ENCODE measurements at regions of chr12 and their contacts with region 1.

Region 1: DNA sequence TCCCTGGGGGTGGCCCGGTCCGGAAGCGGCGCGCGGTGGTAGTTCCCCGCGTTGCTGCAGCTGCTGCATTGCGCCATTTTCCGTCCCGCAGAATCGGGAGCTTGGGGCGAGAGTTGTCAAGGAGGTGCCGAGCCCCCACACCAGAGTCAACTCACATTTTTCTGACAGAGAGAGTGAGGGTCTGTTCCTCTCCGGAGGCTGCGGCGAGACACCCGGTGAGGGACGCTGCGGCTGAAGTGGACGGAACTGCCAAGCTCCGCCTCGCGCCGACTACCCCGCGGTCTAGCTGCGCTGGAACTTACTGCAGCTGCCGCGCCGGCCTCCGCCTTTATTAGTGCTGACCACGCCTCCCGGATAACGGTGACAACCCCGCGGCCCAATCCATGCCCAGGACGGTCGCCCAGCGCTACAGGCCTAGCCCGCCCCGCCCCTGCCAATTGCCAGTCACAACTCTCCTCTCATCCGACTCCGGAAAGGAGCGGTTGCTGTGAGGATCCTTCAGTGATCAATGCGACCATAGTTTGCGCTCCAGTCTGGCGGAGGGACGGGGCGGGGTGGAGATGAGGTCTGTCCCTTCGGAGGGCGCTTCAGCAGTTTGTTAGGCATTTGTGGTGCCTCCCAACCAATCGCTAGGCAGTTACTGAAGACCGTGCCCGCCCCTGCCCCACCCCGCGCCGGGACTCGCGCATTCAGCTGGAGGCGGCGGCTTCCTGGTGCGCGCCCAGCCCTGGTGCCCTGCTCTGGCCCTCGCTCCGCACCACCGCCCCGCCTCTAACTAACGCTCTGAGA is at the start of gene VAMP1:
- DNase-seq: peak; percentile 92
- ATAC-seq: peak; percentile 96
- H3K4me3 ChIP-seq: peak within 1 kb of the TSS; percentile 99
- H3K27ac ChIP-seq: peak within 1 kb of the TSS; percentile 63
- H3K4me1 ChIP-seq: peaks cover 18% of the 10 kb centered on the region
- H3K27me3 ChIP-seq: no peaks in the 10 kb centered on the region
- CTCF ChIP-seq: no peak
- EP300 ChIP-seq: no peak
- POLR2A ChIP-seq: peak; percentile 100
- RAD21 ChIP-seq: no peak
- polyA plus RNA-seq, gene VAMP1: 4.8 to 8.8 TPM

Region 2: GRCh38 chr12:6285063-6285477 is 185.5 kb before region 1 on chr12:
- CTCF ChIA-PET with region 1: interaction called, 10 read pairs
- POLR2A ChIA-PET with region 1: interaction called, 4 read pairs
- RAD21 ChIA-PET with region 1: interaction called, 5 read pairs
- SMC1A ChIA-PET with region 1: interaction called, 13 read pairs
- in situ Hi-C with region 1: no loop called
- intact Hi-C with region 1: no loop called
- DNase-seq: no peak
- ATAC-seq: peak; percentile 96
- H3K4me3 ChIP-seq: no peak overlapping the region
- H3K27ac ChIP-seq: no peak overlapping the region
- H3K4me1 ChIP-seq: no peaks in the 10 kb centered on the region
- H3K27me3 ChIP-seq: no peaks in the 10 kb centered on the region; a peak in 1 of 4 replicates
- CTCF ChIP-seq: peak; percentile 91 to 96 (median 91); a peak in 5 of 6 replicates
- EP300 ChIP-seq: no peak
- POLR2A ChIP-seq: no peak
- RAD21 ChIP-seq: peak; percentile 95

Region 3: GRCh38 chr12:6335451-6336078 is 135.0 kb before region 1 on chr12:
- CTCF ChIA-PET with region 1: interaction called, 43 read pairs
- POLR2A ChIA-PET with region 1: interaction called, 22 read pairs
- RAD21 ChIA-PET with region 1: interaction called, 44 read pairs
- SMC1A ChIA-PET with region 1: interaction called, 39 read pairs
- in situ Hi-C with region 1: loop called (anchors 5 kb)
- intact Hi-C with region 1: loop called (anchors 2 kb)
- DNase-seq: peak; percentile 60
- ATAC-seq: peak; percentile 85
- H3K4me3 ChIP-seq: peak overlapping the region; percentile 53
- H3K27ac ChIP-seq: peak overlapping the region; percentile 93
- H3K4me1 ChIP-seq: peaks cover 45% of the 10 kb centered on the region
- H3K27me3 ChIP-seq: no peaks in the 10 kb centered on the region
- CTCF ChIP-seq: peak; percentile 71 to 92 (median 76)
- EP300 ChIP-seq: no peak; a peak in 1 of 4 replicates
- POLR2A ChIP-seq: peak; percentile 83
- RAD21 ChIP-seq: peak; percentile 75

Region 4: DNA sequence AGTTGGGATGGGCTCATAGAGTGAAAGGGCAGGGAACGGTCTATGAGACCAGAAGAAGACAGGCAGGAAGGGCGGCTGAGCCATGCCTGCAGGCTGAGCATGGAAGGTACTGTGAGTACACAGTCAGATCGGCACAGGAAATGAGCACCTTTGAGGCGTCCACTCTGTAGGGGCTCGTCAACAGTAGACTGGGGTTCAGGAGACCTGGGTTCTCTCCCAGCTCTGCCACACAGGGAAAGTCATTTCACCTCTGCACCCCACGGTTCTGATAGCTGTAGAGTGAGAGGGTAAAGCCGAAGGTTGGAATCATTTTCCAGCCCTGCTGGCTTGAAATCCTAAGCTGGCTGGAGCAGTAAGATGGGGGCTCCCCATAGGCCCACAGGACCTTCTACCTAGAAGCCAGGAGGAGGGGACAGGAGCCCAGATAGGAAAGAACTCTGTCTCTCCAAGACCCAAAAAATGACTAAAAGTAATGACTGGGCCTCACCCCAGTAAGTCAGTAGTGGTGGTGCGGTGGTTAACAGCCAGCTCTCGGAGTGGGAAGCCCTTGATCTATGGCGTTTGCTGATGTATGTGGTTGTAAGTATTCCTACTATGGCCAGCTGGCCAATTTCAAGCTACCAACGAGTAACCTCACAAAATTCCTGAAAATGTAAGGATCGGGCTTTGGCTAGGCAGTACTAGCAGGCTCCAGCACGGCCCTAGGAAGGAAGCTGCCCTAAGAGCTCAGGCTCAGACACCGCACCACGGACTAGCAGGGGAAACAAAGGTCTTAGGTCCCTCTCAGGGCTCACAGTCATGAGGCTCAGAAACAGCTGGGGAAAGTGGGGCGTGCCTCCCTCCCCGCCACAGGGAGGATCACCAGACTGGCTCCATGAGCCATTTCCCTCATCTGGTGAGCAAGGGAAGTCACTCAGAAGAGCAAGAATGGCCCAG is 36.1 kb before region 1 on chr12:
- CTCF ChIA-PET with region 1: interaction called, 62 read pairs
- POLR2A ChIA-PET with region 1: interaction called, 384 read pairs
- RAD21 ChIA-PET with region 1: interaction called, 319 read pairs
- SMC1A ChIA-PET with region 1: interaction called, 32 read pairs
- in situ Hi-C with region 1: no loop called
- intact Hi-C with region 1: no loop called
- DNase-seq: no peak
- ATAC-seq: peak; percentile 70
- H3K4me3 ChIP-seq: no peak overlapping the region
- H3K27ac ChIP-seq: peak overlapping the region; percentile 85
- H3K4me1 ChIP-seq: peaks cover 53% of the 10 kb centered on the region
- H3K27me3 ChIP-seq: no peaks in the 10 kb centered on the region
- CTCF ChIP-seq: no peak
- EP300 ChIP-seq: no peak
- POLR2A ChIP-seq: peak; percentile 56
- RAD21 ChIP-seq: no peak

Region 5: GRCh38 chr12:6493497-6494257 is 23.1 kb after region 1 on chr12 and contains the start of gene NCAPD2:
- CTCF ChIA-PET with region 1: interaction called, 9 read pairs
- POLR2A ChIA-PET with region 1: interaction called, 25 read pairs
- RAD21 ChIA-PET with region 1: interaction called, 6 read pairs
- SMC1A ChIA-PET with region 1: interaction called, 7 read pairs
- in situ Hi-C with region 1: no loop called
- intact Hi-C with region 1: loop called (anchors 1 kb)
- DNase-seq: peak; percentile 88
- ATAC-seq: peak; percentile 94
- H3K4me3 ChIP-seq: peak within 1 kb of the TSS; percentile 93
- H3K27ac ChIP-seq: peak within 1 kb of the TSS; percentile 97
- H3K4me1 ChIP-seq: peaks cover 6% of the 10 kb centered on the region; the same call in 1 of the 2 replicates
- H3K27me3 ChIP-seq: no peaks in the 10 kb centered on the region
- CTCF ChIP-seq: peak in 2 of 3 experiments; percentile 2 to 25; a peak in 1 of 6 replicates
- EP300 ChIP-seq: no peak
- POLR2A ChIP-seq: peak; percentile 81
- RAD21 ChIP-seq: no peak
- polyA plus RNA-seq, gene NCAPD2: 24.2 to 32.8 TPM

Region 6: GRCh38 chr12:6554168-6555017 is 83.8 kb after region 1 on chr12:
- CTCF ChIA-PET with region 1: interaction called, 16 read pairs
- POLR2A ChIA-PET with region 1: interaction called, 10 read pairs
- RAD21 ChIA-PET with region 1: interaction called, 7 read pairs
- SMC1A ChIA-PET with region 1: interaction called, 7 read pairs
- in situ Hi-C with region 1: no loop called
- intact Hi-C with region 1: no loop called
- DNase-seq: no peak
- ATAC-seq: peak; percentile 83
- H3K4me3 ChIP-seq: peak overlapping the region; percentile 89
- H3K27ac ChIP-seq: peak overlapping the region; percentile 27
- H3K4me1 ChIP-seq: peaks cover 10% of the 10 kb centered on the region
- H3K27me3 ChIP-seq: no peaks in the 10 kb centered on the region
- CTCF ChIP-seq: peak; percentile 80 to 85 (median 84)
- EP300 ChIP-seq: no peak
- POLR2A ChIP-seq: no peak
- RAD21 ChIP-seq: peak; percentile 48

Measured in GM12878 (cell line).